ENCODE measurements at regions of chr1 and their contacts with region 1.

Region 1: DNA sequence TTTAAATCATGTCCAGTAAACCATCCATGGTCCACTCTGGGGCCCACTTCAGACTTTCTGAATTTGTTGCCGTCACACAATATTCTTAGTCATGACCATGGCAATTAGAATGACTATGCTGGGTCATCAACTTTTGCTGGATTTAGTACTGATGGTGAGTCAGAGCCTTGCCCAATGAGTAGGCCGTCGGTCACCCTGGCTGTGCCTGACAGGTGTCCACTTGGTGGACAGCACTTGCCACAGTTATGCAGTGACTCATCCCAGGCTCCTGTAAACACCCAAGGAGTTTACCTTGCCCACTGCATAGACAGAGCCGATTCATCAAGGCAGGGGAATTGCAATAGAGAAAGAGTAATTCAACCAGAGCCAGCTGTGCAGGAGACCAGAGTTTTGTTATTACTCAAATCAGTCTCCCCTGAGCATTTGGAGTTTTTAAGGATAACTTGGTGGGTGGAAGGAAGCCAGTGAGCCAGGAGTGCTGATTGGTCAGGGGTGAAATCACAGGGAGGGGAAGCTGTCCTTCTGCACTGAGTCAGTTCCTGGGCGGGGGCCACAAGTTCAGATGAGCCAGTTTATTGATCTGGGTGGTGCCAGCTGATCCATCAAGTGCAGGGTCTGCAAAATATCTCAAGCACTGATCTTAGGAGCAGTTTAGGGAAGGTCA is 333.8 kb downstream of the PTPRU start:
- DNase-seq: peak; percentile 88 to 97
- H3K4me3 ChIP-seq: no peak overlapping the region
- H3K27ac ChIP-seq: peak overlapping the region; percentile 55
- H3K4me1 ChIP-seq: peaks cover 32% of the 10 kb centered on the region
- H3K27me3 ChIP-seq: no peaks in the 10 kb centered on the region
- CTCF ChIP-seq: no peak

Region 2: GRCh38 chr1:29550119-29550898 is 19.8 kb before region 1 on chr1:
- CTCF ChIA-PET with region 1: no interaction called
- POLR2A ChIA-PET with region 1: no interaction called
- intact Hi-C with region 1: loop called (anchors 1 kb)
- DNase-seq: peak; percentile 91 to 92
- H3K4me3 ChIP-seq: peak overlapping the region; percentile 48; the same call in 1 of the 2 replicates
- H3K27ac ChIP-seq: peak overlapping the region; percentile 81
- H3K4me1 ChIP-seq: peaks cover 33% of the 10 kb centered on the region
- H3K27me3 ChIP-seq: no peaks in the 10 kb centered on the region
- CTCF ChIP-seq: no peak

Region 3: DNA sequence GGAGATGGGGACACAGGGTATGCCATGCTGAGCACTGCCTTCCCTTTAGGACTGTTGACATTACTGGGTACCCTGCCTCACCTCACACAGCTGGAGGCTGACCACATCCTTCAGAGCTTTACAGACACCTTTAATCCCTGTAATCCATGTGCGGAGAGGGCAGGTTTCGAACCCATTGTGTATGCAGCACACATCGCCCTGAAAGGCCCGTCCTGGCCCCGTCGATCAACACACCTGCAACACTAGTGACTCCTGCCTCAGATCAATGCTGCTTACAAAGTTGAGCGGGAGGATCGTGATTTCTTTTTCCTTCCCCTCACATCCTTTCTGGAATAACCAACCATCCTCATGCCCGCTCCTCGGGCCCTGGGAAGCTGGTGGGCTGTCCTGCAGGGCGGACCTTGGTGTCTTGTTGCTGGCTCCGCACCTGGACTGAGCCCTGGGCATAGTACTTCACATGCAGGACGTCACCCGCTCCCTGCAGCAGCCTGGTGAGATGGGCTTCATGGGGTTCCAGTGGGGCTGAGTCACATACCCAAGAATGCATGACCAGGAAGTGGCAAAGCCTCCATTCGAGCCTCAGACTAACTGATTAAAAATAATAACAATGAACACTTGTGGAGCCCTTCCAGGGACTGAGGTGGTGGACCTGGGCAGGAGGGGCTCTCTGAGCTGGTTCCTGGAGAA is 69.8 kb after region 1 on chr1:
- CTCF ChIA-PET with region 1: no interaction called
- POLR2A ChIA-PET with region 1: no interaction called
- intact Hi-C with region 1: loop called (anchors 2 kb)
- DNase-seq: peak; percentile 85 to 87
- H3K4me3 ChIP-seq: no peak overlapping the region
- H3K27ac ChIP-seq: peak overlapping the region; percentile 66
- H3K4me1 ChIP-seq: peaks cover 27% of the 10 kb centered on the region
- H3K27me3 ChIP-seq: no peaks in the 10 kb centered on the region
- CTCF ChIP-seq: no peak

Region 4: GRCh38 chr1:29688471-29689365 is 118.6 kb after region 1 on chr1:
- CTCF ChIA-PET with region 1: no interaction called
- POLR2A ChIA-PET with region 1: no interaction called
- intact Hi-C with region 1: loop called (anchors 10 kb)
- DNase-seq: no peak
- H3K4me3 ChIP-seq: no peak overlapping the region
- H3K27ac ChIP-seq: no peak overlapping the region
- H3K4me1 ChIP-seq: no peaks in the 10 kb centered on the region
- H3K27me3 ChIP-seq: no peaks in the 10 kb centered on the region
- CTCF ChIP-seq: no peak